CD8-positive, alpha-beta T cell (primary cell): ENCODE measurements at regions of chr1 and their contacts with region 1.

Region 1: DNA sequence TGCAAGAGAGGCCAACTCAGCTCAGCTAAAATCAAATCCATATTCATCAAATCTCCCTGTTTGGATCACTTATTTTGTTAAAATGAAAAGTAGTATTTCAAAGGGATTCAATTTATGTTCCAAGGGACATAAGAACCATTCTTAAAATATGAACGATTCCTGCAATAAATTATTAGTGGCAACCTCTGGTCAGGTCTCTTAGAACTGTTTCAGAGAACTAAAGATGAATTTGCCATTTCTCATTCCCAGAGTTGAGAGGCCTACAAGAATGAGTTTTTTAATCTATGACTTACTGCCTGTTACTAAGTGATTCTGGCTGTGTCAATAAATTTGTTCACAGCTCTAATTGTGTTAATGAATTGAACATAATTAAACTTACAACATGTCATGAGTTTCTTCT is 268.5 kb downstream of the SPATA17 start:
- DNase-seq: no peak
- ATAC-seq: no peak
- H3K4me3 ChIP-seq: no peak overlapping the region
- H3K4me3 Mint-ChIP-seq: no peak overlapping the region
- H3K27ac ChIP-seq: no peak overlapping the region
- H3K27ac Mint-ChIP-seq: no peak overlapping the region
- H3K4me1 ChIP-seq: no peaks in the 10 kb centered on the region
- H3K4me1 Mint-ChIP-seq: no peaks in the 10 kb centered on the region
- H3K27me3 ChIP-seq: no peaks in the 10 kb centered on the region
- H3K27me3 Mint-ChIP-seq: no peaks in the 10 kb centered on the region
- CTCF ChIP-seq: no peak

Region 2: GRCh38 chr1:217857061-217857460 is 42.6 kb before region 1 on chr1:
- CTCF ChIA-PET with region 1: no interaction called
- POLR2A ChIA-PET with region 1: no interaction called
- intact Hi-C with region 1: no loop called
- DNase-seq: no peak
- ATAC-seq: no peak
- H3K4me3 ChIP-seq: no peak overlapping the region
- H3K4me3 Mint-ChIP-seq: no peak overlapping the region
- H3K27ac ChIP-seq: no peak overlapping the region
- H3K27ac Mint-ChIP-seq: no peak overlapping the region
- H3K4me1 ChIP-seq: no peaks in the 10 kb centered on the region
- H3K4me1 Mint-ChIP-seq: no peaks in the 10 kb centered on the region
- H3K27me3 ChIP-seq: no peaks in the 10 kb centered on the region
- H3K27me3 Mint-ChIP-seq: no peaks in the 10 kb centered on the region
- CTCF ChIP-seq: no peak

Region 3: GRCh38 chr1:217965156-217965786 is 65.7 kb after region 1 on chr1:
- CTCF ChIA-PET with region 1: no interaction called
- POLR2A ChIA-PET with region 1: no interaction called
- intact Hi-C with region 1: loop called in 1 of 2 experiments (anchors 2 kb)
- DNase-seq: no peak
- ATAC-seq: no peak
- H3K4me3 ChIP-seq: no peak overlapping the region
- H3K4me3 Mint-ChIP-seq: no peak overlapping the region
- H3K27ac ChIP-seq: no peak overlapping the region
- H3K27ac Mint-ChIP-seq: no peak overlapping the region
- H3K4me1 ChIP-seq: no peaks in the 10 kb centered on the region
- H3K4me1 Mint-ChIP-seq: no peaks in the 10 kb centered on the region
- H3K27me3 ChIP-seq: no peaks in the 10 kb centered on the region
- H3K27me3 Mint-ChIP-seq: no peaks in the 10 kb centered on the region
- CTCF ChIP-seq: no peak

Region 4: DNA sequence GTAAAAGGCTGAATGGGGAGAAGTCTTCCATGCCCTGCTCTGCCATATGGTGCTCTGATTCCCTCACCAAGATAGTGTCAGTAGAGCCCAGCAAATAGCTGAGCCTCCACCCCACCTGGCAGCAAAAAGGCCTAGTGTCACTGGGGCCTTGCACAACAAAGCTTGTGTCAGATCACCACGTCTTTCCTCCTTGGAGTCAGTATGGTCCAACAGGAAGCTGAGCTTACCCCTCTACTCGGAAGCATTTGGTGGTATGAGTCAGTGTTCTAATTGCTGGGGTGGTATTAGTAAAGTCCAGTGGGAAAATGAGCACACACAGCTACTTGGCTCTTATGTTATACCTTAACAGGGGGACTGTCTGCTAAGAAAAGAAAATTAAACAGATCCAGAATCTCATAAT is 366.7 kb after region 1 on chr1:
- CTCF ChIA-PET with region 1: no interaction called
- POLR2A ChIA-PET with region 1: no interaction called
- intact Hi-C with region 1: no loop called
- DNase-seq: no peak
- ATAC-seq: no peak
- H3K4me3 ChIP-seq: no peak overlapping the region
- H3K4me3 Mint-ChIP-seq: no peak overlapping the region
- H3K27ac ChIP-seq: no peak overlapping the region
- H3K27ac Mint-ChIP-seq: no peak overlapping the region
- H3K4me1 ChIP-seq: no peaks in the 10 kb centered on the region
- H3K4me1 Mint-ChIP-seq: no peaks in the 10 kb centered on the region
- H3K27me3 ChIP-seq: no peaks in the 10 kb centered on the region
- H3K27me3 Mint-ChIP-seq: peaks cover 17% of the 10 kb centered on the region
- CTCF ChIP-seq: no peak